ENCODE measurements at regions of chr1 and their contacts with region 1.

Region 1: GRCh38 chr1:67685067-67685557 is at the start of gene GADD45A:
- DNase-seq: peak; percentile 98 to 100 (median 99)
- ATAC-seq: peak; percentile 85 to 90 (median 88)
- H3K4me3 ChIP-seq: peak within 1 kb of the TSS; percentile 71 to 91 (median 86)
- H3K27ac ChIP-seq: peak within 1 kb of the TSS; percentile 90 to 94 (median 94)
- H3K4me1 ChIP-seq: peaks cover 14 to 31% (median 18%) of the 10 kb centered on the region in 3 donors
- H3K27me3 ChIP-seq: no peaks in the 10 kb centered on the region
- CTCF ChIP-seq: no peak
- total RNA-seq, gene GADD45A: 7.9 to 16.9 (median 12.7) TPM

Region 2: DNA sequence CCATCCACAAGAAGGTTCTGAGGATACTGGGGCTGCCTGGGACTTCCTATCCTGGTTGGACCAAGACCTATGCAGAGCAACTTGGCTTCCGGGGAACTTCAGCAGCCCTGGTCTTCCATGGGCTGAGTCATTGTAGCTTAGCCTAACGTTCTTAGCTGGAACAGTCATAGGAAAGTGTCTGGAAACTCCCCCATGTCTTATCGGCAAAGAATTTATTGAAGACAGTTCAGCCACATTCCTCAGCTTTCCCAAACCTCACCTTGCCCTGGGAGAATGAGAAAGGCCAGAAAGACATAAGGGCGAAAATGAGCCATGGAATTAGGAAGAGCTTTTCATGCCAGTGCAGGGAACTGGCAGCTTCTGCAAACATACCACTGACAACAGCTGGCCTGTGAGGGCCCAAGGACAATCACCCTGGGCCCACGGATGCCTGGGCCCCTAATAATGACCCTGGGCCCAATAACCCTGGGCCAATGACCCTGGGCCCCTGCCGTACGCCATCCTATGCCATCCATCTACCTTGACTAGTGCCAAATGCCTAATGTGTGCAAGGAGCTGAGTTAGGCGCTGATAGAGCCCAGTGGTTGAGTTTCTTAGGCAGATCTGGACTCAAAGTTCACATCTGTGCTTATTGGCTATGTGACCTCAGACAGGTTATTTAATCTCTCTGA is 114.5 kb before region 1 on chr1:
- intact Hi-C with region 1: loop called in 1 of 3 experiments (anchors 10 kb)
- DNase-seq: peak in 2 of 6 donors; percentile 31 to 40
- ATAC-seq: peak in 3 of 4 donors; percentile 6 to 58 (median 36)
- H3K4me3 ChIP-seq: no peak overlapping the region
- H3K27ac ChIP-seq: peak overlapping the region in 2 of 4 donors; percentile 58 to 66
- H3K4me1 ChIP-seq: peaks cover 35 to 38% (median 38%) of the 10 kb centered on the region in 3 donors
- H3K27me3 ChIP-seq: no peaks in the 10 kb centered on the region
- CTCF ChIP-seq: no peak